Posterior vena cava (tissue), 2 donors: ENCODE measurements at regions of chr1 and their contacts with region 1.

Region 1: GRCh38 chr1:237619553-237619952 is 271.2 kb downstream of the ZP4 start:
- DNase-seq: no peak

Region 2: GRCh38 chr1:237562242-237562823 is 57.2 kb before region 1 on chr1:
- intact Hi-C with region 1: no loop called
- DNase-seq: no peak

Region 3: DNA sequence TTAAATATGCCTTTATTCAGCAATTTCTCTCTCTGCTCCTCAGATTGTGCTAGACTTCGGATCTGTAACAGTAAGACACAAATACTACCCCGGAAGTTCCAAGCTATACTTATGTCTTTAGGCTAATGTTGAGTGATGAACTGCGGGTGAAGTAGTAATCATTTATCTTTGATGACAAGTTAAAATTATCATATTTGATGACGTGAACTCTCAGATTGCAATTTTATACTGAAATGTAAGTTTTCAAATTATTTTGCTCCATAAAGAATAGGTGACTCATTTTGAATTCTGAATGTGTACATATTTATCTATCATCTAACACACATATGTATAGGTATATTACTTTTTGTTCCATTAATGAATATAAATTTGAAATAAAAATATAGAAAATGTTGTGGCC is 1777.4 kb after region 1 on chr1:
- intact Hi-C with region 1: loop called in 1 of 2 experiments (anchors 5 kb)
- DNase-seq: no peak